ENCODE measurements at regions of chr1 and their contacts with region 1.

Region 1: DNA sequence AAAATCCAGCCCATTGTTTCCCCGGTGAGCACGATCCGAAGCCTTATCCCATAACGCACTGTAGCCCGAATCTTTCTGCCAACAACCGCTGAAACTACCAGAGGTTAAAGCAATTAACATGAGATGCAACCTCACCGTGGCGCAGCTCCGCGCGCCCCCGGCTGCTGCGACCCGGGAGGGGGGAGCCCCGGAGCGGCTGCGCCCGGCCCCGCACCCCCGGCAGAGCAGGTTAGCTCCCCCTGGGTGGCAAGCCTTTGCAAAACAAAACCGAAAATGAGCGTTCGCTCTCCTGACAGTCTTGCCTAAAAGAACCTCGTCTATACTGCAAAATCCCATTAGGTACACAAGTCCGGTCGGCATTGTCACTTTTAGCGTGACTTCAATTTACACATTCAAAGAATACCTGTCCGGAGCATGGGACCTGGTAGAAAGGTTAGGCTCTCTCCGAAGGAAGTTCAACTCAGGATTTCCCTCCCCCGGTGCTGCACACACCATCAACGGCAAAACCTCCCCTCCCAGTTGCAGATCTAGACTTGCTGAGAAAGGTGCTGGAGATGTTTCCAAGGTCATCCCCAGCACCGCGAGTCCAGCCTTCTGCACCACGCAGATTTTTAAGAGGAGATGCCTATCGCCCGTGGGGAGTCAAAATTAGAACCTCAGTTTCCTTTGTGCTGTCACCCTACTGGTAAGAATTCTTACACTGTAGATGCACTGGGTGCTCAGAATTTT is 107.5 kb downstream of the ZNF281 start:
- DNase-seq: peak; percentile 82
- ATAC-seq: peak; percentile 79
- H3K4me3 ChIP-seq: peak overlapping the region; percentile 60 to 96 (median 88)
- H3K4me3 Mint-ChIP-seq: peak overlapping the region; percentile 93
- H3K27ac ChIP-seq: peak overlapping the region; percentile 60 to 61
- H3K27ac Mint-ChIP-seq: peak overlapping the region; percentile 89
- H3K4me1 ChIP-seq: peaks cover 44 to 47% of the 10 kb centered on the region in 2 donors
- H3K4me1 Mint-ChIP-seq: peaks cover 40% of the 10 kb centered on the region
- H3K27me3 ChIP-seq: no peaks in the 10 kb centered on the region
- H3K27me3 Mint-ChIP-seq: no peaks in the 10 kb centered on the region
- CTCF ChIP-seq: peak; percentile 35

Region 2: DNA sequence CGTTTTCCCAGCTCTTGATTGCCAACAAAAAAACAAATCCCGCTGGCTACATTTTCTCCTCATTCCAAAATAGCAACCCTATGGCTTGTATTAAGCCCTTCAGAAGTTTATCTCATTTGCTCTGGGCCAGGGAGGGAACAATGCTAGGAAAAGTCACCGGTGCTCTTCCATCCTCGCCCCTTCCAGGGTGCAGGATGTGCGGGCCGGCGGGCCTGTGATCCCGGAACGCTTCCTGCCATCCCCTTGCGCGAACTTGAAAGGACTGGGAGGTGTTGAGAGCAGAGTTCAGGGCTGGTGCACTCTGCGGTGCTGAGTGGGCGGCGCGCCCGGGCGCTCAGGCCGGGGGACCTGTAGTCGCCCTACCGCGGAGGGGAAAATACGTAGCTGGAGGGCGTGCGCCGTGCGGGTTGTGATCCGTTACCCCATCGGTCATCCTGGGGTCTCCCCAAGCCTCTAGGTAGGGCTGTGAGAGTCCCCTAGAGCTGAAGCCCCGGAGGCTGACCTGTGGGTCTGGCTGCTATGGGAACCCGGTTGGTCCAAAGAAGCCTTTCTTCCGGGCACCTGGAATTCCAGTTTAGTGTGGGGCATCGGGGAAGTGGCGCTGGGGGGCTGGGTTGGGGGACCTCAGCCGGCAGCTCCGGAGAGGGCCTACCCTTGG is 261.7 kb before region 1 on chr1:
- CTCF ChIA-PET with region 1: no interaction called
- POLR2A ChIA-PET with region 1: no interaction called
- intact Hi-C with region 1: loop called (anchors 10 kb)
- DNase-seq: peak; percentile 49
- ATAC-seq: no peak
- H3K4me3 ChIP-seq: no peak overlapping the region
- H3K4me3 Mint-ChIP-seq: peak overlapping the region; percentile 76
- H3K27ac ChIP-seq: no peak overlapping the region
- H3K27ac Mint-ChIP-seq: peak overlapping the region; percentile 15
- H3K4me1 ChIP-seq: peaks cover 58 to 63% of the 10 kb centered on the region in 2 donors
- H3K4me1 Mint-ChIP-seq: peaks cover 46% of the 10 kb centered on the region
- H3K27me3 ChIP-seq: peaks cover 3 to 91% (median 73%) of the 10 kb centered on the region in 4 experiments
- H3K27me3 Mint-ChIP-seq: peaks cover 76% of the 10 kb centered on the region
- CTCF ChIP-seq: no peak

Region 3: GRCh38 chr1:200154069-200154767 is 148.1 kb before region 1 on chr1:
- CTCF ChIA-PET with region 1: interaction called, 7 read pairs
- POLR2A ChIA-PET with region 1: no interaction called
- intact Hi-C with region 1: loop called (anchors 1 kb)
- DNase-seq: peak; percentile 78
- ATAC-seq: peak; percentile 88
- H3K4me3 ChIP-seq: peak overlapping the region in 2 of 5 experiments; percentile 18 to 50
- H3K4me3 Mint-ChIP-seq: peak overlapping the region; percentile 80
- H3K27ac ChIP-seq: peak overlapping the region; percentile 78 to 98
- H3K27ac Mint-ChIP-seq: peak overlapping the region; percentile 93
- H3K4me1 ChIP-seq: peaks cover 40 to 52% of the 10 kb centered on the region in 2 donors
- H3K4me1 Mint-ChIP-seq: peaks cover 59% of the 10 kb centered on the region
- H3K27me3 ChIP-seq: no peaks in the 10 kb centered on the region
- H3K27me3 Mint-ChIP-seq: no peaks in the 10 kb centered on the region
- CTCF ChIP-seq: no peak

Region 4: GRCh38 chr1:200279810-200280411 is 22.4 kb before region 1 on chr1:
- CTCF ChIA-PET with region 1: interaction called, 16 read pairs
- POLR2A ChIA-PET with region 1: no interaction called
- intact Hi-C with region 1: no loop called
- DNase-seq: peak; percentile 42
- ATAC-seq: no peak
- H3K4me3 ChIP-seq: no peak overlapping the region
- H3K4me3 Mint-ChIP-seq: no peak overlapping the region
- H3K27ac ChIP-seq: no peak overlapping the region
- H3K27ac Mint-ChIP-seq: no peak overlapping the region
- H3K4me1 ChIP-seq: peaks cover 13 to 17% of the 10 kb centered on the region in 2 donors
- H3K4me1 Mint-ChIP-seq: peaks cover 8% of the 10 kb centered on the region
- H3K27me3 ChIP-seq: no peaks in the 10 kb centered on the region
- H3K27me3 Mint-ChIP-seq: no peaks in the 10 kb centered on the region
- CTCF ChIP-seq: peak; percentile 65

Region 5: GRCh38 chr1:200336111-200336845 is 33.9 kb after region 1 on chr1:
- CTCF ChIA-PET with region 1: interaction called, 4 read pairs
- POLR2A ChIA-PET with region 1: interaction called, 10 read pairs
- intact Hi-C with region 1: no loop called
- DNase-seq: no peak
- ATAC-seq: no peak
- H3K4me3 ChIP-seq: no peak overlapping the region
- H3K4me3 Mint-ChIP-seq: no peak overlapping the region
- H3K27ac ChIP-seq: peak overlapping the region in 1 of 2 donors; percentile 88
- H3K27ac Mint-ChIP-seq: peak overlapping the region; percentile 90
- H3K4me1 ChIP-seq: peaks cover 22 to 26% of the 10 kb centered on the region in 2 donors
- H3K4me1 Mint-ChIP-seq: peaks cover 34% of the 10 kb centered on the region
- H3K27me3 ChIP-seq: no peaks in the 10 kb centered on the region
- H3K27me3 Mint-ChIP-seq: no peaks in the 10 kb centered on the region
- CTCF ChIP-seq: no peak

Region 6: GRCh38 chr1:200488375-200489165 is 186.2 kb after region 1 on chr1:
- CTCF ChIA-PET with region 1: interaction called, 3 read pairs
- POLR2A ChIA-PET with region 1: no interaction called
- intact Hi-C with region 1: loop called (anchors 10 kb)
- DNase-seq: peak; percentile 71
- ATAC-seq: peak; percentile 69
- H3K4me3 ChIP-seq: no peak overlapping the region
- H3K4me3 Mint-ChIP-seq: no peak overlapping the region
- H3K27ac ChIP-seq: no peak overlapping the region
- H3K27ac Mint-ChIP-seq: no peak overlapping the region
- H3K4me1 ChIP-seq: peaks cover 0 to 5% of the 10 kb centered on the region in 2 donors
- H3K4me1 Mint-ChIP-seq: no peaks in the 10 kb centered on the region
- H3K27me3 ChIP-seq: peaks cover 0 to 4% (median 0%) of the 10 kb centered on the region in 4 experiments
- H3K27me3 Mint-ChIP-seq: peaks cover 14% of the 10 kb centered on the region
- CTCF ChIP-seq: peak; percentile 91

Measured in B cell (primary cell).